ENCODE measurements at regions of chr10 and their contacts with region 1.

Region 1: GRCh38 chr10:72370201-72370722 is 15.5 kb upstream of the DNAJB12 start:
- DNase-seq: no peak
- H3K4me3 ChIP-seq: no peak overlapping the region
- H3K27ac ChIP-seq: no peak overlapping the region
- H3K4me1 ChIP-seq: no peaks in the 10 kb centered on the region
- H3K27me3 ChIP-seq: no peaks in the 10 kb centered on the region
- CTCF ChIP-seq: no peak

Region 2: DNA sequence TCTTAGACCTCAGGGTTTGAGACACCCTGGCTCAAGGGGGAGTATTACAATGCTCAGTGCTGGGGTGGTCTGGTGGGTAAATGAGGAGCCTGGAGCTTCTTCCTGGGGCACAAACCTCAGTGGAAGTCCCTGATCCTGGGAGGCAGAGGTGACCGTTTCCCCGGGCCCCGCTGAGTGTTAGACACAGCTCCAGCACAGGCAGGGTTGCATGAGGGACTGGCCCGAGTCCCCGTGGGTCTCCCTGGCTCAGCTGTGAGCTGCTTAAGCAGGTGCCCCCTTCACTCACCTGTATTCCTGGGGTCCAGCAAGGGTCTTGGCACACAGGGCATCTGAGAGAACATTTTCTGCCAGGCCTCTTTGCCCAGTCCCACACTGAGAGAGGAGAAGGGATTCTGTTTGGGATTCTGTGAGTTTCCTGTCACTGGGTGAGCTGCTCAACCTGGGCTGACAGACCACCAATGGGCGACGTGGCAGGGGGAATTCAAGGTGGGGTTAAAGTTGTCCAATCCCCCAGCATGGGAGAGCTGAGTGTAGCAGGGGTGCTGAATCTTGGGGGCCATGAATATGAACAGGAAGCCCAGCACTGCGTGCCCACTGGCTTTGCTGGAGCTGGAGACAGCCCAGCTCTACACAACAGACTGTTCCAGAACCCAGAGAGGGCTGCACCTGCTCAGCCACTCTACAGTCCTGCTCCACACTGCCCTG is 66.7 kb before region 1 on chr10:
- CTCF ChIA-PET with region 1: no interaction called
- POLR2A ChIA-PET with region 1: no interaction called
- intact Hi-C with region 1: no loop called
- DNase-seq: no peak
- H3K4me3 ChIP-seq: no peak overlapping the region
- H3K27ac ChIP-seq: no peak overlapping the region
- H3K4me1 ChIP-seq: peaks cover 18% of the 10 kb centered on the region
- H3K27me3 ChIP-seq: no peaks in the 10 kb centered on the region
- CTCF ChIP-seq: no peak

Region 3: GRCh38 chr10:72435570-72435969 is 65.3 kb after region 1 on chr10:
- CTCF ChIA-PET with region 1: no interaction called
- POLR2A ChIA-PET with region 1: interaction called, 25 read pairs
- intact Hi-C with region 1: no loop called
- DNase-seq: no peak
- H3K4me3 ChIP-seq: no peak overlapping the region
- H3K27ac ChIP-seq: no peak overlapping the region
- H3K4me1 ChIP-seq: no peaks in the 10 kb centered on the region
- H3K27me3 ChIP-seq: no peaks in the 10 kb centered on the region
- CTCF ChIP-seq: no peak

Measured in PC-9 (cell line).